Posterior vena cava (tissue), 2 donors: ENCODE measurements at regions of chr19 and their contacts with region 1.

Region 1: DNA sequence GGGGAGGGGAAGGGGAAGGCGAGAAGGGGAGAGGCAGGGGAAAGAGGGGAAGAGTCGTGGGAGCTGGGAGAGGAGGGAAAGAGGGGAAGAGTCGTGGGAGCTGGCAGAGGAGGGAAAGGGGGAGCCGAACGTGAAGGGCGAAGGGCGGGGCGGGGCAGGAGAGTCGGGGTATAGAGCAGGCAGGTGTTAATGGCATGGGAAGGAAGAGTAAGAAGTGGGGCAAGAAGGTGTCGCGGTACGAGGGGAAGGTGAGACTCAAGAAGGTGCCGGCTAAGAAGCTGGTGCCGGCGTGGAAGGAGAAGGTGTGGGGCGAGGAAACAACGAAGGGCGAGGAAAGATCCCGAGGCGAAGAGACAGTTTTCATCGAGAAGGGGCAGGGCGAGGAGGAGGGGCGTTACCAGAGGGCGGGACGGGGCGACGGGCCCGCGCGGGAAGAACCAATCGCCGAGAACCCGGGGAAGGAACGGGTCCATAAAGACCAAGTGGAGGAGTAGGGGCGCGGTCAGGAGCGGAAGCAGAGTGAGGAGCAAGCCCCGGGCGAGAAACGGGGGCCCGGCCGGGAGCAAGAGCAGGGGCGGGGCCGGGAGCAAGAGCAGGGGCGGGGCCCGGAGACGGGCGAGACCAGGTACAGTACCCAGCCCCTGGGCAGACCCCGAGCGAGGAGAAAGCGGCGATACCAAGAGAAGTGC is 463 bp downstream of the CATSPERG start:
- DNase-seq: peak; percentile 99

Region 2: GRCh38 chr19:37906869-37907734 is 429.0 kb before region 1 on chr19 and contains the start of gene SIPA1L3:
- intact Hi-C with region 1: loop called in 1 of 2 experiments (anchors 5 kb)
- DNase-seq: peak; percentile 98
- total RNA-seq, gene SIPA1L3: 13.2 to 13.9 TPM

Region 3: DNA sequence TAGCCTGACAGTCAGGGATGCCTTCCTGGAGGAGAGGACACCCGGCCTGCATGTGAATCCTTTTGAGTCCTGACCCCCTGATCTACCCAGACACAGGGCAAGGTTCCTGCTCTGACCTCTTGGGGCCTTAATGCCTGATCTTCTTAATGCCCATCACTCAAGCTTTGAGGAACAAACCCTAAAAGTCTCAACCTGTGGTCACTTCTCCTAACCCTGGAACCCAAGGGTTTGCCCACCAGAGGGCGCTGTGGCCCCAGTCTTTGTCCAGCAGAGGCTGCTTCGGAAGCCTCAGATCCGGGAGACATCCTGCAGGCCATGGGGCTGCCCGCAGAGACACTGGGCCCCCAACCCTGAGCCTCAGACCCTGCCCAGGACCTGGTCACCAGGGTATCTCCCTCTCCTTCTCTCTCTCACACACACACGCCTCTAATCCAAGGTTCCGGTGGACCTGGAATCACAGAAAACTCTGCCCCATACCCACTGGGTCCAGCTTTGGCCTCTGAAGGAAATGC is 102.3 kb before region 1 on chr19:
- intact Hi-C with region 1: loop called in 1 of 2 experiments (anchors 2 kb)
- DNase-seq: peak; percentile 95

Region 4: GRCh38 chr19:38245826-38246498 is 90.1 kb before region 1 on chr19:
- intact Hi-C with region 1: loop called in 1 of 2 experiments (anchors 2 kb)
- DNase-seq: no peak

Region 5: GRCh38 chr19:38389560-38390281 is 53.6 kb after region 1 on chr19:
- intact Hi-C with region 1: no loop called
- DNase-seq: no peak